ENCODE measurements at regions of chr6 and their contacts with region 1.

Region 1: DNA sequence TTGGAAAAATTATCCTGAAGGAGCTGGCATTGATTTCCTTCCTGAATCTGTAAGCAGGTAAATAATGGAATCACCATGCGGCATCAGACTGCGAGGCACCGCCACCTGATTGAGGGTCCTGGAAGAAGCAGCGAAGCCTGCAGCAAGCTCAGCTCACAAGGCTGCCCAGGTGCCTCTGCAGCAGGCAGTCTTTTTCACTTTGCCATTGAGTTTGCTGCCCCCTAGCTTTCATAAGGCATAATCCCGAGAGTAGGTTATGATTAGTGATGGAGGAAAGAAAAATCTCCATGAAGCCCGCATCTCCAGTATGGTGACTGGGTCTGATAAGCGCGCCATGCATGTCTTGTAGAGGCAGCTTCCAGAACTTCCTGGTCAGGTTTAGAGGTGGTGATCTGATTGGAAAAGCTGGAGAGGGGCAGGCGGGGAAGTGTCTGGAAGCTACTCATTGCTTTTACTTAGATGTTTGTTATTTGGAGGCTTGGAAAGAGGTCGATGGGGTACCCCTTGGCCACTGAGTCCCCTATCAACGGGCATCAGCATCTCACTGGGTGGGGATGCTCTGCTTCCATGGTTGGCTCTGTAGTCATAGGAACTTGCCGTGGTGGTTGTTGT is 26.7 kb downstream of the IYD start:
- DNase-seq: peak; percentile 52
- ATAC-seq: peak; percentile 70
- H3K4me3 Mint-ChIP-seq: no peak overlapping the region
- H3K27ac Mint-ChIP-seq: no peak overlapping the region
- H3K4me1 Mint-ChIP-seq: no peaks in the 10 kb centered on the region
- H3K27me3 Mint-ChIP-seq: peaks cover 12% of the 10 kb centered on the region

Region 2: DNA sequence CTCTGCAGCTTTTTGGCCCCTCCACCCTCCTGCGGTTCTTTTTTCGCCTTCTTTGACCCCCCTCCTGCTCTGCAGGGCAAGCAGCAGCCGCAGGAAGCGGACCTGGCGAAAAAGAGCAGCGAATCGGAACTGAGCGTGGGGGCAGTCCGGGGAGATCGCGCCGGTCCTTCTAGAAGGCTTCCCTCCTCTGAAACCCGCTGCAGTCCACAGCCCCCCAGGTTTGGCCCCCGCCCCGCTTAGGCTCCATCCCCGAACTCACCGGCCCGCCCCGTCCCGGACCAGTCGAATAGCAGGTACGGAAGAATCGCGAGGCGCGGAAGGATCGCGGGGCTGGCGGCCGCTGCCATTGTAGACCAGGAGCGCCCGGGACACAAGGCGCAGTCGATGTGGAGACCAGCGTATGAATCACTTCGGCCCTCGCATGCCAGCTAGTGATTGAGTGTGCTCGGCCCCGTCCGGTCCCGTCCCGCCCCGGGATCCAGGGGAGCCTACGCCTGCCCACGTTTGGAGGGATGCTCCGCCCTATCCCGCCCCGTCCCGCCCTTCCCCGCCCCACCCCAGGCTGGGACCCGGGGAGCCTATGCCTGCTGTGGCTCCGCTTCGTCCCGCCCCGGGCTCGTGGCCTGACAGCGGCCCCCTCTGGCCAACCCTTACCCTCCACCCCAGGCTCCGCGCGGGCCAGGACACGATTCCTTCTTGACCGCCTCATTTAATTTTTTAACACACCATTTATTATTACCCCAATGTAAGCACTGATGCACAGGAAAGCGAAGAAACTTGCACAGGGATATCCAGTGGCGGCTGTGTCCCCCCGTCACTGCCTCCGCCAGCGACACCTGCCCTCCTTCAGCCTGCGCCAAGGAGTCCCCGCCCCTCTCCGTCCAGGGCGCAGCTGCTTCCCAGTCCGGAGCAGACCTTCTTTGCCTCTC is 326.5 kb before region 1 on chr6 and contains the start of gene ULBP3:
- CTCF ChIA-PET with region 1: interaction called, 14 read pairs
- POLR2A ChIA-PET with region 1: no interaction called
- DNase-seq: peak; percentile 81
- ATAC-seq: peak; percentile 92
- H3K4me3 Mint-ChIP-seq: peak within 1 kb of the TSS; percentile 70
- H3K27ac Mint-ChIP-seq: peak within 1 kb of the TSS; percentile 36
- H3K4me1 Mint-ChIP-seq: peaks cover 22% of the 10 kb centered on the region
- H3K27me3 Mint-ChIP-seq: peaks cover 18% of the 10 kb centered on the region
- total RNA-seq, gene ULBP3: 1.8 to 2.9 TPM

Region 3: GRCh38 chr6:150380256-150380655 is 15.2 kb before region 1 on chr6:
- CTCF ChIA-PET with region 1: interaction called, 17 read pairs
- POLR2A ChIA-PET with region 1: no interaction called
- DNase-seq: no peak
- ATAC-seq: no peak
- H3K4me3 Mint-ChIP-seq: no peak overlapping the region
- H3K27ac Mint-ChIP-seq: no peak overlapping the region
- H3K4me1 Mint-ChIP-seq: no peaks in the 10 kb centered on the region
- H3K27me3 Mint-ChIP-seq: peaks cover 36% of the 10 kb centered on the region

Region 4: GRCh38 chr6:150409576-150410066 is 14.1 kb after region 1 on chr6:
- CTCF ChIA-PET with region 1: interaction called, 10 read pairs
- POLR2A ChIA-PET with region 1: no interaction called
- DNase-seq: no peak
- ATAC-seq: no peak
- H3K4me3 Mint-ChIP-seq: no peak overlapping the region
- H3K27ac Mint-ChIP-seq: no peak overlapping the region
- H3K4me1 Mint-ChIP-seq: no peaks in the 10 kb centered on the region
- H3K27me3 Mint-ChIP-seq: peaks cover 36% of the 10 kb centered on the region